Pancreas (tissue), 10 donors: ENCODE measurements at regions of chr12 and their contacts with region 1.

Region 1: DNA sequence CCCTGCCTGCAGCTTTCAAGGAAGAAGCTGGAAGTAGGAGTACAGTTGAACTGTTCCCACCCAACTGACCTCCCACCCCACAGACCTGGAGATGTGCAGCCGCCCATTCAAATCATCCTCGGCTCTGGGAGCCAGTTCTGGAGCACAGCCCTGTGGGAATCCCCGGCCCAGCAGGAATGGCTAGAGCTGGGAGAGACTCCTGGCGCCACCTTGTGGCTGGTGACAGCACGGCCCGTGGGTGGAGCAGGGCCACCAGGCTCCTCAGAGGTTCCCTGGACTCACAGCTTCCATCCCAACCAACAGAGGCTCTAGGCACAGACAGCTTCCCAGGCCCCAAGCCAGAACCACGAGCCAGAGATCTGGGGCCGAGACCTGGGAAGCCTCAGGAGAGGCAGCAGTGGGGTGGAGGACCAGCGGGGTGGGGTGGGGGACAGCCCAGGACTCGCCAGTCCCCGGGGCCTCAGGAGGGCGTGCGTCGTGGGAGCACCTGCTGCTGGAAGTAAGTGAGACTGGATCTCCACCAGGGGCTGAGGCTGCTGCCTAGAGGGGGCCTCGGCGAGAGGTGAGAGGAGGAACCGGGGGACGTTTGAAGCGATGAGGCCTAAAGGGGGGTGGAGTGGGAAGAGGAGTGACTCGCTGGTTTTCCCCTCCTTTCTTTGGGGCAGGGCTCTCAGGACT is 43.4 kb downstream of the RNF34 start:
- DNase-seq: peak; percentile 72 to 97 (median 87)
- ATAC-seq: peak; percentile 87 to 98 (median 96)
- H3K4me3 ChIP-seq: no peak overlapping the region
- H3K27ac ChIP-seq: no peak overlapping the region
- H3K4me1 ChIP-seq: no peaks in the 10 kb centered on the region
- H3K27me3 ChIP-seq: no peaks in the 10 kb centered on the region
- CTCF ChIP-seq: peak; percentile 69 to 85 (median 82)

Region 2: GRCh38 chr12:121060149-121061001 is 383.0 kb before region 1 on chr12:
- intact Hi-C with region 1: loop called in 1 of 3 experiments (anchors 10 kb)
- DNase-seq: peak in 1 of 6 donors; percentile 12
- ATAC-seq: peak; percentile 53 to 88 (median 82)
- H3K4me3 ChIP-seq: peak overlapping the region in 1 of 4 donors; percentile 25
- H3K27ac ChIP-seq: peak overlapping the region in 2 of 4 donors; percentile 7 to 30
- H3K4me1 ChIP-seq: no peaks in the 10 kb centered on the region
- H3K27me3 ChIP-seq: no peaks in the 10 kb centered on the region
- CTCF ChIP-seq: peak; percentile 11 to 29 (median 20)

Region 3: DNA sequence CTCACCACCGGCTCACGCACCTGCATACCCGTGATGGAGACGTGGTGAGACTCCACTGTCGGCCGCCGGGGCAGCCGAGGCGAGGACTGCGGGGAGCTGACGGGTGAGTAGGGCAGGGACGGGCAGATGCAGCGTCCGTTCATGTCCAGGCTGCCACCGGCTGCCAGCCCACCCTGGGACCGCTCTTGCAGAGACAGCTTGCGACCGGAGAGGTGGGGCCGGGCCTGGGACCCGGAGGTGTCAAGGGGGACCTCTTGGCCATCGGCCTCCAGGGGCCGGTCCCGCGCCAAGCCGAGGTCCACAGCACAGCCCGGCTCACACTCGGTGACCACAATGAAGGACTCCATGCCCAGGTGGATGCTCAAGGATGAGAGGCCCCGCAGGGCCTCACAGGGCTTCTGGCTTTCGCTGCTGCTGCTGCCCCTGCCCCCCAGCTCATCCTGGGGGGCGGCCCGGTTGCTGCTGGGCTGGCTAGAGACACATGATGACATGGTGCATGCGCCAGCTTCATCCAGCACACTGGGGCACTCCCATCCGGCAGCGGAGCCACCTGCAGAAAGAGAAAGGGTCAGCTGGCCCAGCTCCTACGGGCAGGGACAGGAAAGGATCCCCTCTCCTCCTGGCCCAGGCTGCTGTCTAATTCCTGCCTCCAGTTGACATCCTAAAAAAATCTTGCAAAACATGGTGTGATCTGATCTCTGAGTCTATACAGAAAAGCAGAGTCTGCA is 169.1 kb before region 1 on chr12:
- intact Hi-C with region 1: no loop called
- DNase-seq: no peak
- ATAC-seq: no peak
- H3K4me3 ChIP-seq: no peak overlapping the region
- H3K27ac ChIP-seq: no peak overlapping the region
- H3K4me1 ChIP-seq: peaks cover 3 to 5% (median 3%) of the 10 kb centered on the region in 3 donors
- H3K27me3 ChIP-seq: no peaks in the 10 kb centered on the region
- CTCF ChIP-seq: no peak

Region 4: GRCh38 chr12:121334513-121335343 is 108.6 kb before region 1 on chr12:
- intact Hi-C with region 1: loop called in 2 of 3 experiments (anchors 5 to 10 kb)
- DNase-seq: no peak
- ATAC-seq: peak; percentile 68 to 92 (median 88)
- H3K4me3 ChIP-seq: no peak overlapping the region
- H3K27ac ChIP-seq: no peak overlapping the region
- H3K4me1 ChIP-seq: peaks cover 8 to 24% (median 19%) of the 10 kb centered on the region in 3 donors
- H3K27me3 ChIP-seq: no peaks in the 10 kb centered on the region
- CTCF ChIP-seq: peak; percentile 61 to 87 (median 75)

Region 5: DNA sequence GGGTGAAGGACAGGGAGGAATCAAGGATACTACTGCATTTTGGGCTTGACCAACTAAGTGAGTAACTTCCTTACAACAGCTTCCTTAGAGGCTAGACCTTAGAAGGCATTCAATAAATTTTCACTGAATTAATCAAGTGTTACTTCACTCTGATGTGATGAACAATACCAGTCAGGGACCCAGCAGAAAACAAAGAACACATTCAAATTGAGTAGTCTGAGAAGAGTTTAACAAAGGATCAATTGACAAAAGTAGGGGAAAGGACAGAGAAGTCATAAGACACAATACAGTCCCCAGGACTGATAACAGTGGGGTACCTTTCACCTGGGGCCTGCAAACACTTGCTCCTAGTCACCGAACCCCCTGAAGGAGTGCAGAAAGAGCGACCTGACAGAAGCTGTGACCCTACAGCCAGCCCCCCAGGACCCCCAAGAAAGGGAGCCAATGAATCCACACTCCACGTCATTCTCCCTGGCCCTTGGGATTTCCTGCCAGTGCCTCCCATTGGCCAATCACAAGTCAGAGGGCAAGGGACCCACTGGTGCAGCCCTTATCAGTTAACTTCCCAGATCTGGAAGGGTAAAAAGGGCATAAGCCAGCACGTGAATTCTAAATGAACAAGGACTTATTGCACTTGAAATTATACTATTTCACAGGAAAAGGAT is 98.0 kb before region 1 on chr12:
- intact Hi-C with region 1: loop called in 1 of 3 experiments (anchors 5 kb)
- DNase-seq: no peak
- ATAC-seq: peak in 1 of 4 donors; percentile 18
- H3K4me3 ChIP-seq: no peak overlapping the region
- H3K27ac ChIP-seq: no peak overlapping the region
- H3K4me1 ChIP-seq: no peaks in the 10 kb centered on the region
- H3K27me3 ChIP-seq: no peaks in the 10 kb centered on the region
- CTCF ChIP-seq: no peak

Region 6: DNA sequence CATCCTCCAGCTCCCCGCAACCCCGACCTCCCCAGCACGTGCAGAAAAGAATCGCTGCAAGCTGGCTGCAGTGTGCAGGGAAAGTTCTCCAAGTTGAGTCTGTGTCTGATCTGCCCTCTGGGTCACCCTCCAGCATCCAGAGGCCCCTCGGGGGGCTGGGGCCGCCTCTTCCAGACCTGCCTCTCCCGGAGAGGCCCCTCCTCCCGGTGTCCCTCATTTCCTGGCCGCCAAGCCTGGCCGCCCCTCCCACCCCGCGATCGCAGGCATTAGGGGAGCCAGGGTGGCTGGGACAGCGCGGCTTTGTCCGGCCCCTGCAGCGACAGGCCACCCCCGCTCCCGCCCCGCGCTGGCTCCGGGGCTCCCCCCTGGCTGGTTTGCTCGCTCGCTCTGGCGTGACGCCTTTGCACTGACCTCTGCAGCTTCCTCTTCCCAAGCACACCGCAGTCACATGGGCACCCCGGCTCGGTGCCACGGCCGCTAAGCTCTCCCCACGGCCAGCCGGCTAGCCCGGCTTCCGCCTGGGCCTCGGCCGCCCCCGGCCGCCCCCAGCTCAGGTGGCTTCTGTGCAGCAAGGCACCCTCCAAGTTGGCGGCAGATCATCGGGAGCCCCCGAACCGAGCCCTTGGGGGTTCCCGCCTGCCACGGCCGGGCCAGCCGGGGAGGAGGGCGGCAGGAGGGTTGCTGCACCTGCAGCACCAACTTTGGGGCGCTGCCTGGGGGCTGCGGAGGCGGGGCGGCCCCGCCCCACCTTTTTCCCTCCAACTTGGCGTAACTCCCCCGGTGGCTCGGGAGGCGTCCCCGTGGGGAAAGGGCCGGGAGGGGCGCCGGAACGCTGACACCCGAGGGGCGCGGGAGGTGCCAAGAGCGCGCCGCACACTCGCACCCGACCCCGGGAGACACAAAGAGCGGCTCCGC is 93.8 kb after region 1 on chr12:
- intact Hi-C with region 1: no loop called
- DNase-seq: peak; percentile 88 to 96 (median 90)
- ATAC-seq: peak; percentile 86 to 90 (median 88)
- H3K4me3 ChIP-seq: peak overlapping the region; percentile 43 to 80 (median 68)
- H3K27ac ChIP-seq: peak overlapping the region; percentile 67 to 93 (median 88)
- H3K4me1 ChIP-seq: peaks cover 0 to 6% (median 4%) of the 10 kb centered on the region in 3 donors
- H3K27me3 ChIP-seq: no peaks in the 10 kb centered on the region
- CTCF ChIP-seq: no peak

Region 7: GRCh38 chr12:121626087-121626852 is 182.9 kb after region 1 on chr12 and contains the start of gene ORAI1:
- intact Hi-C with region 1: no loop called
- DNase-seq: peak; percentile 95 to 99 (median 98)
- ATAC-seq: peak; percentile 82 to 91 (median 88)
- H3K4me3 ChIP-seq: peak within 1 kb of the TSS; percentile 52 to 81 (median 62)
- H3K27ac ChIP-seq: peak within 1 kb of the TSS; percentile 81 to 96 (median 90)
- H3K4me1 ChIP-seq: peaks cover 0 to 22% (median 14%) of the 10 kb centered on the region in 3 donors
- H3K27me3 ChIP-seq: no peaks in the 10 kb centered on the region
- CTCF ChIP-seq: no peak
- total RNA-seq, gene ORAI1: 3.9 to 11.3 (median 5.8) TPM